HepG2 (cell line): ENCODE measurements at regions of chr6 and their contacts with region 1.

Region 1: DNA sequence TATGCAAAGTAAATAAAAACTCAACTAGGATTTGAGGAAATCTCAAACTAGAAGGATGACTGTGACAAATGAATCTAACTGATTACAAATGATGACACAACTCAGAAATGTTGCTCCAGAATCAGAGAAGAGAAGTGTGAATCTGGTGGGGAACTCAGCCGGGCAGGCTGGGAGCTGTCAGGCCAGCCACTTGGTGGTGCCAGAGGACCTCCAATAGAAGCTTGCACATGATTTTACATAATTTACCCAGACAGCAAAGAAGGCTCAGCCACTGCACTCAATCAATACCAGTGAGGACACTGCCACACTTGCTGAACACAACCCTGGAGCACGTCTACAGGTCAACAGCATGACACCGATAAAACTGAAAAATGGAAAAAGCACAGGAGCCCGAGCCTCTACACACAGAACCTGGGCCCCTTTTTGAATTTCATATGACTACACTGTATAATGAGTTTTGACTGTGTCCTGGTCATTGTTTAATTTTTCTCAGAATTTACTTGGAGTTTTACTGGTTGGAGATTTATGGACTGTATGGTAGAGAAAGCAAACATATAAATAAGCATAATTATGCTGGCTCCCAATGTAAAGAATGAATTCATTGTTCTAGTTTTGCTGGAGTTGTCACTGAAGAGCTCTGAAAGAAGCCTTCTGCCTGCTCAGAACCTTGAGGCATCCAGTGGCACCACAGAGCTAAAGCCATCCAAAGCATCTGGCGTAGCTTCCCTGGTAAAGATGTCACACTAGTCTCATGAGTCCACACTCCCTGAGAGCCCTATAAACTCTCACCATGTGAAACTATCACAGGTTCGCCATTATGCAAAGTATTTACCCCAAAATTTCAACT is 296.5 kb downstream of the THBS2 start:
- DNase-seq: peak; percentile 67
- ATAC-seq: peak; percentile 99
- H3K4me3 ChIP-seq: no peak overlapping the region
- H3K27ac ChIP-seq: no peak overlapping the region
- H3K4me1 ChIP-seq: no peaks in the 10 kb centered on the region
- H3K27me3 ChIP-seq: peaks cover 2 to 23% of the 10 kb centered on the region in 2 experiments; a peak in 3 of 5 replicates
- CTCF ChIP-seq: peak; percentile 92
- EP300 ChIP-seq: no peak
- POLR2A ChIP-seq: no peak
- RAD21 ChIP-seq: peak; percentile 86

Region 2: GRCh38 chr6:169326067-169326799 is 369.1 kb after region 1 on chr6:
- CTCF ChIA-PET with region 1: interaction called, 6 read pairs
- POLR2A ChIA-PET with region 1: no interaction called
- in situ Hi-C with region 1: loop called (anchors 10 kb)
- intact Hi-C with region 1: loop called (anchors 1 kb)
- DNase-seq: peak; percentile 54
- ATAC-seq: peak; percentile 87
- H3K4me3 ChIP-seq: no peak overlapping the region
- H3K27ac ChIP-seq: no peak overlapping the region
- H3K4me1 ChIP-seq: 0 out of 2 replicates have a peak, but pooled peaks cover 6% of the 10 kb centered on the region
- H3K27me3 ChIP-seq: peaks cover 0 to 17% of the 10 kb centered on the region in 2 experiments; a peak in 2 of 5 replicates
- CTCF ChIP-seq: peak; percentile 83
- EP300 ChIP-seq: no peak
- POLR2A ChIP-seq: no peak
- RAD21 ChIP-seq: peak; percentile 81

Region 3: DNA sequence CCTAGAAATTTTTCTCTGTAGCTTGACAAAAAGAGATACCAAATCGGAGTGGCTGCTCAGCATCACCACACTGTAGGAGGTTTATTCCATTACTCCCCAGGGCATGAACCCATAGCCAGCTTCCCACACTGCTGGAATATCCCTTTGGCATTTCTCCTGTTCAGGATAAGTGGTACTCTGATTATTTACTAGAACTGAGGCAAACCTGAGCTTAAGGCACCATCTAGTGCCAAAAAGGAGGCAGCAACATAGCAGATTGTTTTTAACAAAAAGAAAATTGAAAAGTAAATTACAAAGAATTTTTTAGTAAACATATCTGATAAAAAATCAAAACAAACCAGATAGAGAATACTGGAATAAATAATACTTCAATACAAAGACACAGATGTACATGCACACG is 563.0 kb after region 1 on chr6:
- CTCF ChIA-PET with region 1: interaction called, 5 read pairs
- POLR2A ChIA-PET with region 1: no interaction called
- in situ Hi-C with region 1: no loop called
- intact Hi-C with region 1: loop called (anchors 1 kb)
- DNase-seq: no peak
- ATAC-seq: no peak
- H3K4me3 ChIP-seq: no peak overlapping the region
- H3K27ac ChIP-seq: no peak overlapping the region
- H3K4me1 ChIP-seq: no peaks in the 10 kb centered on the region
- H3K27me3 ChIP-seq: no peaks in the 10 kb centered on the region
- CTCF ChIP-seq: peak; percentile 33
- EP300 ChIP-seq: no peak
- POLR2A ChIP-seq: no peak
- RAD21 ChIP-seq: no peak

Region 4: GRCh38 chr6:169689247-169689646 is 732.1 kb after region 1 on chr6:
- CTCF ChIA-PET with region 1: no interaction called
- POLR2A ChIA-PET with region 1: no interaction called
- in situ Hi-C with region 1: loop called (anchors 25 kb)
- intact Hi-C with region 1: no loop called
- DNase-seq: no peak
- ATAC-seq: no peak
- H3K4me3 ChIP-seq: no peak overlapping the region
- H3K27ac ChIP-seq: no peak overlapping the region
- H3K4me1 ChIP-seq: no peaks in the 10 kb centered on the region
- H3K27me3 ChIP-seq: no peaks in the 10 kb centered on the region
- CTCF ChIP-seq: no peak
- EP300 ChIP-seq: no peak
- POLR2A ChIP-seq: no peak
- RAD21 ChIP-seq: no peak

Region 5: GRCh38 chr6:170529839-170530469 is 1572.8 kb after region 1 on chr6:
- CTCF ChIA-PET with region 1: interaction called, 9 read pairs
- POLR2A ChIA-PET with region 1: no interaction called
- in situ Hi-C with region 1: no loop called
- intact Hi-C with region 1: loop called (anchors 5 kb)
- DNase-seq: peak; percentile 69
- ATAC-seq: peak; percentile 91
- H3K4me3 ChIP-seq: no peak overlapping the region
- H3K27ac ChIP-seq: no peak overlapping the region
- H3K4me1 ChIP-seq: peaks cover 5% of the 10 kb centered on the region
- H3K27me3 ChIP-seq: no peaks in the 10 kb centered on the region; a peak in 1 of 5 replicates
- CTCF ChIP-seq: peak; percentile 89
- EP300 ChIP-seq: no peak
- POLR2A ChIP-seq: no peak
- RAD21 ChIP-seq: peak; percentile 87